CD14-positive monocyte (primary cell): ENCODE measurements at regions of chr10 and their contacts with region 1.

Region 1: DNA sequence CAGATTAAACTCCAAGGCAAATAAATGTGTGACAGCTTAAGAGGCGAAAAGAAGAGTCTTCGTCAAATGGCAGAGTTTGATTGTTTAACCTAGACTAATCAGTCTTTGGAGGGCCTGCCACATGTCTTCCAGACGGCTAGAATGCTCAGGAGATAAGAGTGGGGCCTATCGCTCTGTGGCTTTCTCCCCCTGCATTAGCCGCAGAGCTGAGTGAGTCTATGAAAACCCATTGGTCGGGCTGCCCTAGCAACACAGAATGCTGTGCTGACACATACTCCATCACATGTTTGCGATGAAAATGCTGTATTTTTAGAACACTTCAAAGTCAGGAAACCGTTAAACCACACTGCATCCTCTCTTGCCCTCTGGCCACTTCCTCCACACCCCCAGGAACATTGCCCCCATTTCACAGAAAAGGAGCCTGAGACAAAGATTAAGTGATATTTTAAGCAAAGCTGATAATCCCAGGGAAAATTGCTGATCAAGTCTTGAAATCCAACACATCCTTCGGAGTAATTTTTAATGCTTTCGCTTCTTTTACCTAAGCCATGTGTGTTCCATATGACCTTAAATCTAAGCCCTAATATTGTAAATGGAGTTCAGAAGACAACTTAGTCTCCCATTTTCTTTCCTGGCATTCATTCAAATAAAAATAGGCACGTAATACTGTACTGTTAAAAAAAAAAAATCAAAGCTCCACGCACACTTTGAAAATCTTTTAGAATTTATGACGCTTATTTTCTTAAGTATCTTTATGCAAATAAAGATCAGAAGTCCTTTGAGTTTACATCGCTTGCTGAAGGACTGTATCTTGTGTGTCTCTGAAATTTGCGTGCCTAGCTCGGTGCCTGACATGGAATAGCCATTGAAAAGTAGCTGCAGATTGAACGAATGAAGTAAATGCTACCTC is 161.2 kb downstream of the CELF2 start:
- DNase-seq: peak; percentile 56 to 83 (median 74)
- H3K4me3 ChIP-seq: peak overlapping the region in 1 of 3 experiments; percentile 58
- H3K4me3 Mint-ChIP-seq: peak overlapping the region; percentile 57 to 81
- H3K27ac ChIP-seq: peak overlapping the region; percentile 74 to 91
- H3K27ac Mint-ChIP-seq: peak overlapping the region; percentile 92 to 97 (median 95)
- H3K4me1 ChIP-seq: peaks cover 95 to 100% of the 10 kb centered on the region in 2 donors
- H3K4me1 Mint-ChIP-seq: peaks cover 77% of the 10 kb centered on the region
- H3K27me3 ChIP-seq: no peaks in the 10 kb centered on the region
- H3K27me3 Mint-ChIP-seq: peaks cover 0 to 1% (median 0%) of the 10 kb centered on the region in 3 donors
- CTCF ChIP-seq: no peak

Region 2: GRCh38 chr10:11225935-11226334 is 47.1 kb after region 1 on chr10:
- intact Hi-C with region 1: loop called (anchors 5 kb)
- DNase-seq: peak; percentile 88 to 91 (median 91)
- H3K4me3 ChIP-seq: peak overlapping the region in 1 of 3 experiments; percentile 14
- H3K4me3 Mint-ChIP-seq: no peak overlapping the region
- H3K27ac ChIP-seq: peak overlapping the region; percentile 72 to 84
- H3K27ac Mint-ChIP-seq: peak overlapping the region; percentile 83 to 96 (median 92)
- H3K4me1 ChIP-seq: peaks cover 27 to 30% of the 10 kb centered on the region in 2 donors
- H3K4me1 Mint-ChIP-seq: peaks cover 51% of the 10 kb centered on the region
- H3K27me3 ChIP-seq: no peaks in the 10 kb centered on the region
- H3K27me3 Mint-ChIP-seq: no peaks in the 10 kb centered on the region
- CTCF ChIP-seq: no peak